Posterior cingulate gyrus (tissue), 11 donors: ENCODE measurements at regions of chr14 and their contacts with region 1.

Region 1: GRCh38 chr14:38867561-38868150 is 235.4 kb downstream of the SEC23A start:
- DNase-seq: peak; percentile 49 to 95 (median 84)

Region 2: GRCh38 chr14:37985826-37986470 is 881.7 kb before region 1 on chr14:
- intact Hi-C with region 1: loop called (anchors 10 kb)
- DNase-seq: peak in 6 of 10 donors; percentile 15 to 58 (median 31)

Region 3: GRCh38 chr14:38721822-38722431 is 145.7 kb before region 1 on chr14:
- intact Hi-C with region 1: loop called (anchors 1 kb)
- DNase-seq: peak in 7 of 10 donors; percentile 19 to 85 (median 71)

Region 4: GRCh38 chr14:39276005-39276404 is 408.3 kb after region 1 on chr14:
- intact Hi-C with region 1: no loop called
- DNase-seq: no peak